MCF 10A (cell line): ENCODE measurements at regions of chr12 and their contacts with region 1.

Region 1: GRCh38 chr12:16385782-16386646 is 38.6 kb downstream of the MGST1 start:
- DNase-seq: peak; percentile 34
- H3K4me3 Mint-ChIP-seq: no peak overlapping the region
- H3K27ac Mint-ChIP-seq: no peak overlapping the region
- H3K4me1 Mint-ChIP-seq: peaks cover 7% of the 10 kb centered on the region
- H3K27me3 Mint-ChIP-seq: no peaks in the 10 kb centered on the region
- CTCF ChIP-seq: peak; percentile 53

Region 2: DNA sequence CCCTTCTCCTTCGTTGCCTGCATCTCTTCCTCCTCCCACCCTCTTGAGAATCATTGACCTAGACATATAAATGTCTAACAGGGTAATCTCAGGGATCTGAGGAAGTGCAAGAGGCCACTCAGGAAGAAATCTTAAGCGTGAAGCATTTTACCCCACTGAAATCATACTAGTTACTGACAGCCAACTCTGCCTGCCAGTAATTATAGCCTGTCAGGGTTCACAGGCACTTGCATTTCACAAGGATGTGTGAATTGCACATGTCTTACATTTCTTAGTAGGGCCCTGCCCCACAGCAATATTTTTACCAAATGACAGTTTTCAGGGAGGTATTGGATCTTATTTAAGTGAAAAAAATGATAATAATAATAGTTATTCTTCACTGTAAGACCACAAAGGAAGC is 235.7 kb before region 1 on chr12:
- CTCF ChIA-PET with region 1: no interaction called
- POLR2A ChIA-PET with region 1: no interaction called
- intact Hi-C with region 1: no loop called
- DNase-seq: no peak
- H3K4me3 Mint-ChIP-seq: no peak overlapping the region
- H3K27ac Mint-ChIP-seq: no peak overlapping the region
- H3K4me1 Mint-ChIP-seq: peaks cover 7% of the 10 kb centered on the region
- H3K27me3 Mint-ChIP-seq: no peaks in the 10 kb centered on the region
- CTCF ChIP-seq: no peak

Region 3: DNA sequence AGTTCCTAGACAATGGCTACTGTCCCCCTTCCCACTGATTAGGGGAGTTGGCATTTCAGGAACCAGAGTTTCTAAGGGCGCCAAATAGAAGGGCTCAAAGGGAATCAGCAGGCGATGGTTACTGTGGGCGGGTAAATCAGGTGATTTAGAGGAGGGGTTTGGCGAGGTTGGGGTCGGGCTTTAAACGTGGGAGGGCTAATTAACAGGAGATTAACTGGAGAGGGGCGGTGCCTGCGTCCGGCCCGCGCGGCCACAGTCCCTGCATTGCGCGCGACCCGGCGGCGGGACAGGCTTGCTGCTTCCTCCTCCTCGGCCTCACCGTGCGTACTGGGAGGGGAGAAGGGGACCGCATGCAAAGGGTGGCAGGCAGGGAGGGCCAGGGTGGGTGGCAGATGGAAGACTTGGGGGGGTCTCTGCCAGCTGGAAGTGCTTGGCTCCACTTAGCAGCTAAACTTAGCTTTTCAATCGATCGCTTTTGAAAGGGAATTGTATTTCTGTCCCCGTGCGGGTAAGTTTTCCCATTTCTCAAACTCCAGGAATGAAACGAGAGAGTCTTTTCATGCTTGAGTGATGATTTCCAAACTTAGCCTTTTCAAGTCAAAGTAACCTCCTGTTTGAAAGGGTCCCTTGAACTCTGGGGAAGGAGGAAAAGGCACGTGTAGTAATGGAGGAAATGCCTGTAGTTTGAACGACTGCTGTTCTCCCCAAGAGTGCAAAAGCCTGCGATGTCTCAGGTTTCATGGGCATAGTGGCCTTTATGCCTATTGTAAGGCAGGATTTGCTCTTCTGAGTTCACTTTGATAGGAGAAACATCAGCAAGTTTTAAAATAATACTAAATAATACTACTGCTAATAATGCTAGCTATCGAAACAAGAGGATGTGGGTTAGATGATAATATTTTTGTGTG is 38.4 kb before region 1 on chr12 and contains the start of gene MGST1:
- CTCF ChIA-PET with region 1: no interaction called
- POLR2A ChIA-PET with region 1: no interaction called
- intact Hi-C with region 1: loop called (anchors 2 kb)
- DNase-seq: peak; percentile 85
- H3K4me3 Mint-ChIP-seq: peak within 1 kb of the TSS; percentile 85
- H3K27ac Mint-ChIP-seq: peak within 1 kb of the TSS; percentile 94
- H3K4me1 Mint-ChIP-seq: peaks cover 31% of the 10 kb centered on the region
- H3K27me3 Mint-ChIP-seq: no peaks in the 10 kb centered on the region
- CTCF ChIP-seq: no peak
- total RNA-seq, gene MGST1: 375 and 415 TPM in 2 replicates

Region 4: DNA sequence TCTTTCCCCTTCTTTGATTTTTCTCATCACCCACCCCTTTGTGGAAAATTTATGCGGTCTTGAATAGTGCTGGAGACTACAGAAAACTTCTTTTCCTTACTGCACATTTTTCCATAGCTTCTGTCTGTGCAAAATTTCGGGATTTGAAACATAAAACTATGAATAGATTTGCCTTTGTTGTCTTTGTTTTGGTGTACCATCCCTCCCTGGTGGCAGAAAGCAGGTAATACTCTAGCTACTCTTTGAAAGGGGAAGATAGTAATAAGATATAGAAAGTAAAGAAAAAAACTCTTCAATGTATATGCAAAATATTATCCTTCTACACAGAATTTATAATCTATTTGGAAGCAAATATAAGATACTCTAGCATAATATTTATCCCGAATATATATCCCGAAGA is 299.1 kb after region 1 on chr12:
- CTCF ChIA-PET with region 1: interaction called, 12 read pairs
- POLR2A ChIA-PET with region 1: no interaction called
- intact Hi-C with region 1: loop called (anchors 1 kb)
- DNase-seq: peak; percentile 10
- H3K4me3 Mint-ChIP-seq: no peak overlapping the region
- H3K27ac Mint-ChIP-seq: no peak overlapping the region
- H3K4me1 Mint-ChIP-seq: no peaks in the 10 kb centered on the region
- H3K27me3 Mint-ChIP-seq: no peaks in the 10 kb centered on the region
- CTCF ChIP-seq: peak; percentile 39